Panc1 (cell line): ENCODE measurements at regions of chr22 and their contacts with region 1.

Region 1: DNA sequence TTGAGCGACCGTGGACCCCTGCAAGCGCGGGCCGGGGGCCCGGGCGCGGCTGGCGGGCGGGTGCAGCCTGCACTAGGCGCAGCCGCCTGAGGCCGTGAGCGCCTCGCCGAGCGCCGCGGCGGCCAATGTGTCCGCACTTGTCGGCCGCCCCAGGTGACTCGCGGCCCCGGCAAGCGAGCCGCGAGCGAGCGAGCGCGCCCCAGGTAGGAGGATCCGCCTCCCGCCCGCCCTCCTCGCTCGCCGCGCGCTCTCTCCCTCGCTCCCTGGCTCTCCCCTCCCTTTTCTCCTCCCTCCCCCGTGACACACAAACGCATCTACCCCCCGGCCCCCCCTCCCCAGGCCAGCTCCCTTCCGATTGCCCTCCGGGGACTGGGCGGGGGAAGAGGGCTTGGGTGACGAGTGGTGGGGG is at the start of gene WNT7B:
- DNase-seq: no peak
- ATAC-seq: peak; percentile 57
- H3K4me3 ChIP-seq: peak within 1 kb of the TSS; percentile 60 to 70
- H3K27ac ChIP-seq: peak within 1 kb of the TSS; percentile 77
- H3K4me1 ChIP-seq: peaks cover 26% of the 10 kb centered on the region
- H3K27me3 ChIP-seq: no peaks in the 10 kb centered on the region
- CTCF ChIP-seq: no peak
- total RNA-seq, gene WNT7B: 52.1 TPM

Region 2: GRCh38 chr22:45807156-45807915 is 169.7 kb before region 1 on chr22:
- CTCF ChIA-PET with region 1: interaction called, 10 read pairs
- POLR2A ChIA-PET with region 1: no interaction called
- in situ Hi-C with region 1: no loop called
- intact Hi-C with region 1: no loop called
- DNase-seq: no peak
- ATAC-seq: peak; percentile 38; the same call in 1 of the 2 replicates
- H3K4me3 ChIP-seq: no peak overlapping the region
- H3K27ac ChIP-seq: no peak overlapping the region
- H3K4me1 ChIP-seq: no peaks in the 10 kb centered on the region; the same call in 1 of the 2 replicates
- H3K27me3 ChIP-seq: no peaks in the 10 kb centered on the region
- CTCF ChIP-seq: no peak

Region 3: GRCh38 chr22:45934659-45935341 is 42.2 kb before region 1 on chr22:
- CTCF ChIA-PET with region 1: no interaction called
- POLR2A ChIA-PET with region 1: no interaction called
- in situ Hi-C with region 1: no loop called
- intact Hi-C with region 1: no loop called
- DNase-seq: peak; percentile 81
- ATAC-seq: peak; percentile 83
- H3K4me3 ChIP-seq: peak overlapping the region in 1 of 2 experiments; percentile 30; a peak in 1 of 4 replicates
- H3K27ac ChIP-seq: peak overlapping the region; percentile 83
- H3K4me1 ChIP-seq: peaks cover 48% of the 10 kb centered on the region
- H3K27me3 ChIP-seq: no peaks in the 10 kb centered on the region
- CTCF ChIP-seq: no peak

Region 4: GRCh38 chr22:46078241-46079092 is 101.5 kb after region 1 on chr22:
- CTCF ChIA-PET with region 1: no interaction called
- POLR2A ChIA-PET with region 1: interaction called, 10 read pairs
- in situ Hi-C with region 1: no loop called
- intact Hi-C with region 1: no loop called
- DNase-seq: no peak
- ATAC-seq: peak; percentile 32
- H3K4me3 ChIP-seq: peak overlapping the region; percentile 83 to 90
- H3K27ac ChIP-seq: peak overlapping the region; percentile 99
- H3K4me1 ChIP-seq: peaks cover 27% of the 10 kb centered on the region
- H3K27me3 ChIP-seq: no peaks in the 10 kb centered on the region
- CTCF ChIP-seq: no peak